Aorta (tissue), 5 donors: ENCODE measurements at regions of chr1 and their contacts with region 1.

Region 1: DNA sequence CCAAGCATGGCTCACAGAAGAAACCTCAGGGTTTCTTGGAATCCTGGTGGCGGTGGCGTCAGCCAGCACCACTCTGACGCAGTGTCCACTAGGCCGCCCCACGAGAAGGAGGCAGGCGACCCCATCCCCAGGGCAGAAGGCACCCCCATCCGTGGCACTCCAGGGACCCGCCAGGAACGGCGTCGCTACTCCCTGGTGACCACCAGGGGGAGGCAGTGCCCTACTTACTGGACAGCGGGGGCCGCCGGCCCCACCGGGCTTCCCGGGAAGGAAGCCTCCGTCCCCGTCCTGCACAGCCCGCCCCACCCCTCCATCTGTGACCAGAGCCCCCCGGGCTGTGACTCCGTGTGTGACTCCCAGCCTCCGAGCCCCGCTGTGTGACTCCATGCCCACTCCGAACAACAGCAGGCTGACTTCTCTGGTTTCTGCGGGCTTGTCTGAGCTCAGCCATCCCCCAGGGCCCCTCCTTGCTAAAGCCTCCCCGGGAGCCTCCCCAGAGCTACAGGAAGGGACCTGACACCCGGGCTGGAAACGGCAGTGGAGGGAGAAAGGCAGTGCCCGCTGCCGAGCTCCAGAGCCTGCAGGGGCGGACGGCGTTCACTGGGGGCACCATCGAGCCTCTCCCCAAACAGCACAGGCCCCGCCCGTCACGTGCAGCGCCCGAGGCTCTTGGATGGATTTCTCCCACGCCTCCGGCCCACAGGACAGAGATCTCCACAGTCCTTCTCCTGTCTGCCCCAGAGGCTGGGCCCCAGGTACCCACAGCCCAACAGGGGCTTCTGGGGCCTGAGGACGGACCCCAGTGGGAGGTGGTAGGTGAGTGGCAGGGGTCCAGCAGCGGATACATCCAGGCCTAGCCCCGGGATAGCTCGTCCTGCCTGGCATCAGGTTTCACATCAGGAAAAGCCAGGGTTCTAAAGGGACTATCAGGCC is 21.1 kb downstream of the KIF17 start:
- DNase-seq: peak; percentile 91 to 95
- ATAC-seq: peak; percentile 95
- H3K4me3 ChIP-seq: peak overlapping the region; percentile 31 to 48
- H3K27ac ChIP-seq: peak overlapping the region in 1 of 2 donors; percentile 55
- H3K4me1 ChIP-seq: no peaks in the 10 kb centered on the region
- H3K27me3 ChIP-seq: no peaks in the 10 kb centered on the region

Region 2: DNA sequence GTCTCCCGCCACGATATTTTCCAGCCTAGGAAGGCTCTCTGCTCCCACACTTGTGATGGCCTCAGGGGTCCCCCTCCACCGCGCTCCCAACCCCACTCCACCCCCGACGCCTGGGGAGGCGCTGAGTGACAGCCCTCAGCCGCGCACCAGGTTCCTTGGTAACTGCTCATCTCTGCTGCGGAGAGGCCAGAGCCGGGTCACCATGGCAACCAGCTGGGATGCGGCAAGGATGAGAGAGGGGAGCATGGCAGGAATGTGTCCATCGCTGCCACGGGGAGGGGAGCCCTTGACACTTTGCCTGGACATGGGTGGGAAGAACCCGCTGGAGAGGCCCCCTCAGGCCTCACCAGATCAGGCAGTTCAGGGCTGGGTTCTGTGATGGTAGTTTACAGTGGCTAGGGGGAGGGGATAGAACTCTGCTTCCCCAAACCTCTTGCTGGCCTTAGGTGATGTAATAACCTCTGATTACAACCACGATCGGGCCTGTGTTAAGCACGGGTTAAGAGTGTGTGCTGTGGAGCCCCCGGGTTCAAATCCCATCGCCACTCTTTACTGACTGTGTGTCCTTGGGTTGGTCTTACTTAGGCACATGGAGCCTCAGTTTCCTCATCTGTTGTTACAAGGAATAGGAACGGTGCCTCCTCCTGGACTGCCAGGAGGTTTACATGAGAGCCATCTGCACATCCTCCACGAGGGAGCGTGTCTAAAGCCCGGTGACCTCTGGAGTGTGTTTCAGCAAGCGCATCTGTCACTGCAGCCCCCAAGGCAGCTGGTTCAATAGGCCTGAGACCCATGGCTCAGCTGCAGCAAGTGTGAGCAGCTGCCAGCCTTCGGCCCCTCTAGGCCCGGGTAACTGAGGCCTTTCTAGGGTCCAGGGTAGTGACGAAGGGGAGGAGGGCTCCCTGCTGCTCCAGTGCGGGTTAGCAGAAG is 14.9 kb after region 1 on chr1:
- intact Hi-C with region 1: no loop called
- DNase-seq: no peak
- ATAC-seq: no peak
- H3K4me3 ChIP-seq: no peak overlapping the region
- H3K27ac ChIP-seq: no peak overlapping the region
- H3K4me1 ChIP-seq: no peaks in the 10 kb centered on the region
- H3K27me3 ChIP-seq: no peaks in the 10 kb centered on the region

Region 3: DNA sequence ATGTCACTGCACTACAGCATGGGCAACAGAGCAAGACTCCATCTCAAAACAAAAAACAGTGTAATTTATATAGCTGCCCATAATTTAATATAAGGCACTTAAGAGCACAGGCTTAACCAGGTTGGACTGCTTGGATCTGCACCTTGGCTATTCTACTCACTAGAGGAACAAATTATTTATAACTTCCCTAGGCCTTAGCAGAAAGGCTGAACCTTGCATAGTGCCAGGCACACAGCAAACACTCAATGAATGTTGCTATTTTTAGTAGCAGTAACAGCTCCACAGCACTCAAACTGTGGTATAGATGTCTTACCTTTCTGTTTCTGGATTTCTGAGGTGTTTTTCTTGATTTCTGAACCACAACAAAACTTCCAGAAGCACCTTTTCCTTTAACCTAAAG is 70.6 kb after region 1 on chr1:
- intact Hi-C with region 1: loop called in 1 of 2 experiments (anchors 10 kb)
- DNase-seq: no peak
- ATAC-seq: no peak
- H3K4me3 ChIP-seq: no peak overlapping the region
- H3K27ac ChIP-seq: no peak overlapping the region
- H3K4me1 ChIP-seq: no peaks in the 10 kb centered on the region
- H3K27me3 ChIP-seq: no peaks in the 10 kb centered on the region

Region 4: DNA sequence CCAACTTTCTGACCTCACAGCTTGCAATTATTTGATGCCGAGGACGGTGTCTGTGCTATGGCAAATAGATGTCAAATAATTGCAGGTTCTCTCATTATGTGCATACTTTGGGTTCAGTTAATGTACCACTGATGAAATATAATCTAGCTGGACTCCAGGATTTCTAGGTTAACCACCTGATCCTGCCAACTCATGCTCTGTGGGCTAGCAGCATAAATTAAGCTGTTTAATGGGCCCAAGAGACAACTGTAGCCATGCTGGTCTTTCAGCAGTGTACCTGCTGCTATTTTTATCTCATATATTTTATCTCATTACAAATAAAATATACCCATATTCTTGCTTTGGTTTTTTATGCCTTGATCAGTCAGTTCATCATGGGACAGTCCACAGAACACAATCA is 133.7 kb after region 1 on chr1:
- intact Hi-C with region 1: no loop called
- DNase-seq: no peak
- ATAC-seq: no peak
- H3K4me3 ChIP-seq: no peak overlapping the region
- H3K27ac ChIP-seq: no peak overlapping the region
- H3K4me1 ChIP-seq: no peaks in the 10 kb centered on the region
- H3K27me3 ChIP-seq: no peaks in the 10 kb centered on the region